Colonic mucosa (tissue), 4 donors: ENCODE measurements at regions of chr4 and their contacts with region 1.

Region 1: GRCh38 chr4:27050731-27051317 is 190.2 kb downstream of the STIM2 start:
- DNase-seq: no peak
- H3K4me3 ChIP-seq: no peak overlapping the region
- H3K27ac ChIP-seq: no peak overlapping the region
- H3K4me1 ChIP-seq: no peaks in the 10 kb centered on the region
- H3K27me3 ChIP-seq: no peaks in the 10 kb centered on the region
- CTCF ChIP-seq: no peak

Region 2: GRCh38 chr4:27100719-27101515 is 50.1 kb after region 1 on chr4:
- intact Hi-C with region 1: no loop called
- DNase-seq: no peak
- H3K4me3 ChIP-seq: no peak overlapping the region
- H3K27ac ChIP-seq: no peak overlapping the region
- H3K4me1 ChIP-seq: no peaks in the 10 kb centered on the region
- H3K27me3 ChIP-seq: no peaks in the 10 kb centered on the region
- CTCF ChIP-seq: no peak

Region 3: GRCh38 chr4:27187786-27188185 is 137.0 kb after region 1 on chr4:
- intact Hi-C with region 1: no loop called
- DNase-seq: no peak
- H3K4me3 ChIP-seq: no peak overlapping the region
- H3K27ac ChIP-seq: no peak overlapping the region
- H3K4me1 ChIP-seq: no peaks in the 10 kb centered on the region
- H3K27me3 ChIP-seq: no peaks in the 10 kb centered on the region
- CTCF ChIP-seq: no peak

Region 4: DNA sequence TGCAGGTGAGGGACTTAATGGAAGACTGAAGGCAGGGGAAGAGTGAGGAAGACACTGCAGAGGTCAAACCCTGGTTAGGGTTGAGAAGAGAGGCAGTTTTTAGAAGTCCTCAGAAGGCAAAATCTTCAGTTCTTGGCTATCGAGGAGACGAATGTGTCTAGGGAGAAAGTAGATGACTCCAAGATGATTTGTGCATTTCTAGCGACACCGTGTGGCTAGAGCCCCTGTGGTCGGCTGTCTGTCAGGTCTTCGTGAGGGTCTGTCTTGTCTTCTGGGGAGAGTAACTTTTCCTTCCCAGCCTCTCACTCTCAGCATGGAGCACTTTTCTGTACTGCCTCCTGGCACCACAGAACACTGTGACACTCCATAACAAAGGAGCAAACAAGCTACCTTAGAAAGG is 267.9 kb after region 1 on chr4:
- intact Hi-C with region 1: loop called (anchors 5 kb)
- DNase-seq: peak; percentile 60
- H3K4me3 ChIP-seq: no peak overlapping the region
- H3K27ac ChIP-seq: no peak overlapping the region
- H3K4me1 ChIP-seq: peaks cover 4% of the 10 kb centered on the region
- H3K27me3 ChIP-seq: no peaks in the 10 kb centered on the region
- CTCF ChIP-seq: no peak